ENCODE measurements at regions of chr10 and their contacts with region 1.

Region 1: GRCh38 chr10:46006219-46006618 is 24.2 kb downstream of the NCOA4 start:
- DNase-seq: no peak
- CTCF ChIP-seq: no peak

Region 2: GRCh38 chr10:45809837-45810236 is 196.4 kb before region 1 on chr10:
- CTCF ChIA-PET with region 1: no interaction called
- POLR2A ChIA-PET with region 1: no interaction called
- DNase-seq: no peak
- CTCF ChIP-seq: no peak

Region 3: DNA sequence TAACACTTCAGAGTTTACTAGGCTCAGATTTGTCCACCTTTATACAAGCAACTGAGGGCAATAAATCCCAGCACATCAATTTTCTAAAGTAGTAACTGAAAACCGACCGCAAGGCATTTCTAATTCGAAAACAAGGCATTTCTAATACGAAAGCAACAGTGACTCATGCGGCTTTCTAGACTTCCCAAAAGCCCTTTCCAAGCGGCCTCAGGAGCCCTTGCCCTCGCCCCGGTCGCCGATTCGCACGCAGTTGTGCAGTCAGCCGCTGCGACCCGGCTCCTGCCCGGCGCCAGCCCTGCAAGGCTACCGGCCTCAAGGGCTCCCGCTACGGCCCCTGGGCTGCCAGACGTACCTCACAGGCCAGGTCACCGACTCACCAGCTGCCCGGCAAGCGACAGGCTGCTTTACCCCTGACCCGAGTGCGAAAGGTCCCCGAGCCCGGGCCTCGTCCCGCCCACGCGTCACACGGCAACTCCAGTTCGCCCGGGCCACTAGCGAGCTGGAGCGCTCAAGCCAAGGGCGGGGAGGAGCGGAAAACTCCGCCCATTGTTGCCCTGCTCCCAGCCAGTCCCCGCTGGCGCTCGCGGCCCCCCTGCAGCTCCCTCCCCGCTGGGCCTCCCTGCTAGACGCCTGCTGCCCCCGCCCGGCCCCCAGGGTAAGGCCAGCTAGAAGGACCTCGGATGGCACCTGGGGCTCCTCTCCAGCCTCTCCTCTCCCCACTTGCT is 16.9 kb after region 1 on chr10:
- CTCF ChIA-PET with region 1: interaction called, 88 read pairs
- POLR2A ChIA-PET with region 1: interaction called, 3 read pairs
- DNase-seq: peak; percentile 89
- CTCF ChIP-seq: peak; percentile 62

Region 4: DNA sequence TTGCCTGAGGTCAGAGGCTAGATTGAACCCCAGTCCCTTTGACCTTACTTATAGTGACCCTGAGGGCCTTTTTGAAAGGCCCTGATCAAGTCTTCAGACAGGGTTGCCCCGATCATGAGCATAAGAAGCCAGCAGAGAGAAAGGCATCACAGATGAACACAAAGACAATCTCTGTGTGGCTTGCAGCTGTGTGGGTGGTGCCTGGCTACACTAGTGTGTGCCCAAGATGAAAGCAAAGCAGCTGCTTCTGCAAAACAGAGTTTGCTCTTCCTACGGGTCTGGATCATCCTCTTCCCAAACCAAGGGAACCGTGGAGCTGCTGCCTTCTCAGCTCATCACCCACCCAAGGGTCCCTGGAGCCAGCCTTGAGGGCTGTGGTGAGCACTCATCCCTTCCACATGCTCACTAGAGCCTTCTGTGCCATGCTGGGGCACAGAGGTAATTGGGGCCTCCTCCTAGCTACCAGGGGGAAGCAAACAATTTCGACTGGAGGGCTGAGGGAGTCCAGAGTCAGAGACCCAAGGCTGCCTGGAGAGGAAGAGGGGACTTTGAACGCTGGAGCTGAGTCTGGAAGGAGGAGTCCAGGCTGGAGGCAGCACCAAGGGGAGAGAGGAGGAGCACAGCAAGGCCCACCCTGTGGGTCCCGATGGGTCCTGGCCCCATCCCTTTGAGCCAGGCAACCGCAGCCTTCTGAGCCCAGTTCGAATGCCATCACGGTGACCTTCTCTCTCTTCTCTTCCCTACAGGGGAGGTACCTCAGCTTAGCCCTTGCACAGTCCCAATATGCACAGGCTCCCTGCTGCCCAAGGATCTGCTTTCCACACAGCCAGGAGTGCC is 322.9 kb after region 1 on chr10:
- CTCF ChIA-PET with region 1: no interaction called
- POLR2A ChIA-PET with region 1: no interaction called
- DNase-seq: no peak
- CTCF ChIP-seq: no peak